Activated CD4-positive, alpha-beta T cell treated with anti-CD3 and anti-CD28 coated beads for 36 hours (primary cell): ENCODE measurements at regions of chr16 and their contacts with region 1.

Region 1: GRCh38 chr16:589658-590159 is at the start of gene RAB40C:
- DNase-seq: peak; percentile 100
- ATAC-seq: peak; percentile 88
- H3K4me3 Mint-ChIP-seq: peak within 1 kb of the TSS; percentile 79
- H3K27ac Mint-ChIP-seq: peak within 1 kb of the TSS; percentile 100
- H3K4me1 Mint-ChIP-seq: peaks cover 22% of the 10 kb centered on the region
- H3K27me3 Mint-ChIP-seq: no peaks in the 10 kb centered on the region
- total RNA-seq, gene RAB40C: 8.9 to 9.6 TPM

Region 2: DNA sequence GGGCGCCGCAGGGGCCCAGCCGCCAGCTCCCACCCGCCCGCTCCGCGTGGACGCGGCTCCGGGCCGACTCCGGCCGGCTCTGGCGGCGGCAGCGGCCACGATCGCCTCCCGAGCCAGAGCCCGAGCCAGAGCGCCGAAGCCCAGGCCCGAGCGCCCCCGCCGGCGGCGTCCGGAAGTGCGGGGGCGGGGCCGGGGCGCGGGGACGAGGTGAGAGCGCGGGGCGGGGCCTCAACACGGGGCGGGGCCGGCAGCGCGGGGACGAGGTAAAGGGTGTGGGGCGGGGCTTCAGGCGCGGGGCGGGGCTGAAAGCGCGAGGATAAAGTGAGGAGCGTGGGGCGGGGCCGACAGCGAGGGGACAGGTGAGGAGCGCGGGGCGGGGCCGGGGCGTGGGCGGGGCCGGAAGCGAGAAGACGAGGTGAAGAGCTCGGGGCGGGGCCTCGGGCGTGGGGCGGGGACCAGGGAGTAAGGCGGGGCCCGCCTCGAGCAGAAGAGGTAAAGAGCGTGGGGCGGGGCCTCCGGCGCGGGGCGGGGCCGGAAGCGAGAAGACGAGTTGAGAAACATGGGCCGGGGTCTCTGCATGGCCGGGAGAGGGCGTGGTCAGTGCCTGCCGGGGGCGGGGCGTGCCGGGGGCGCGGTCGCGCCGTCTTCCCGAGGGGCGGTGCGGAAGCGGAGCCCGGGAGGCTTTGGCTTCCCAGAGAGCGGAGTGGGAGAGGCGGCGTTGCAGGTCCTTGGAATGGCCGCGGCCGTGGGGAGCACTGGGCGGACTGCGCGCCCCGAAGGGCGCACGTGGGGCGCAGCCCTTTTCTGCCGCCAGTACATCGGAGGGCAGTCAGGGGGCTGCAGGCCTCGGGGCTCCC is 236.9 kb before region 1 on chr16 and contains the start of gene AXIN1:
- CTCF ChIA-PET with region 1: no interaction called
- POLR2A ChIA-PET with region 1: no interaction called
- intact Hi-C with region 1: loop called in 1 of 2 experiments (anchors 1 kb)
- DNase-seq: peak; percentile 100
- ATAC-seq: peak; percentile 89
- H3K4me3 Mint-ChIP-seq: peak within 1 kb of the TSS; percentile 80
- H3K27ac Mint-ChIP-seq: peak within 1 kb of the TSS; percentile 79
- H3K4me1 Mint-ChIP-seq: peaks cover 45% of the 10 kb centered on the region
- H3K27me3 Mint-ChIP-seq: no peaks in the 10 kb centered on the region
- total RNA-seq, gene AXIN1: 20.0 to 23.8 TPM

Region 3: GRCh38 chr16:425082-425718 is 164.5 kb before region 1 on chr16 and contains the start of gene RAB11FIP3:
- CTCF ChIA-PET with region 1: no interaction called
- POLR2A ChIA-PET with region 1: no interaction called
- intact Hi-C with region 1: loop called in 1 of 2 experiments (anchors 1 kb)
- DNase-seq: peak; percentile 90
- ATAC-seq: peak; percentile 93
- H3K4me3 Mint-ChIP-seq: peak within 1 kb of the TSS; percentile 74
- H3K27ac Mint-ChIP-seq: peak within 1 kb of the TSS; percentile 47
- H3K4me1 Mint-ChIP-seq: peaks cover 30% of the 10 kb centered on the region
- H3K27me3 Mint-ChIP-seq: peaks cover 5% of the 10 kb centered on the region
- total RNA-seq, gene RAB11FIP3: 14.2 to 17.0 TPM

Region 4: GRCh38 chr16:636206-637080 is 46.7 kb after region 1 on chr16 and contains the start of gene METTL26:
- CTCF ChIA-PET with region 1: interaction called, 3 read pairs
- POLR2A ChIA-PET with region 1: no interaction called
- intact Hi-C with region 1: loop called (anchors 1 kb)
- DNase-seq: peak; percentile 97
- ATAC-seq: peak; percentile 89
- H3K4me3 Mint-ChIP-seq: peak within 1 kb of the TSS; percentile 87
- H3K27ac Mint-ChIP-seq: peak within 1 kb of the TSS; percentile 91
- H3K4me1 Mint-ChIP-seq: peaks cover 13% of the 10 kb centered on the region
- H3K27me3 Mint-ChIP-seq: no peaks in the 10 kb centered on the region
- total RNA-seq, gene METTL26: 116 to 127 TPM

Region 5: GRCh38 chr16:695355-696089 is 105.8 kb after region 1 on chr16:
- CTCF ChIA-PET with region 1: no interaction called
- POLR2A ChIA-PET with region 1: no interaction called
- intact Hi-C with region 1: loop called in 1 of 2 experiments (anchors 1 kb)
- DNase-seq: peak; percentile 89
- ATAC-seq: peak; percentile 82
- H3K4me3 Mint-ChIP-seq: peak overlapping the region; percentile 77
- H3K27ac Mint-ChIP-seq: peak overlapping the region; percentile 80
- H3K4me1 Mint-ChIP-seq: peaks cover 13% of the 10 kb centered on the region
- H3K27me3 Mint-ChIP-seq: no peaks in the 10 kb centered on the region

Region 6: DNA sequence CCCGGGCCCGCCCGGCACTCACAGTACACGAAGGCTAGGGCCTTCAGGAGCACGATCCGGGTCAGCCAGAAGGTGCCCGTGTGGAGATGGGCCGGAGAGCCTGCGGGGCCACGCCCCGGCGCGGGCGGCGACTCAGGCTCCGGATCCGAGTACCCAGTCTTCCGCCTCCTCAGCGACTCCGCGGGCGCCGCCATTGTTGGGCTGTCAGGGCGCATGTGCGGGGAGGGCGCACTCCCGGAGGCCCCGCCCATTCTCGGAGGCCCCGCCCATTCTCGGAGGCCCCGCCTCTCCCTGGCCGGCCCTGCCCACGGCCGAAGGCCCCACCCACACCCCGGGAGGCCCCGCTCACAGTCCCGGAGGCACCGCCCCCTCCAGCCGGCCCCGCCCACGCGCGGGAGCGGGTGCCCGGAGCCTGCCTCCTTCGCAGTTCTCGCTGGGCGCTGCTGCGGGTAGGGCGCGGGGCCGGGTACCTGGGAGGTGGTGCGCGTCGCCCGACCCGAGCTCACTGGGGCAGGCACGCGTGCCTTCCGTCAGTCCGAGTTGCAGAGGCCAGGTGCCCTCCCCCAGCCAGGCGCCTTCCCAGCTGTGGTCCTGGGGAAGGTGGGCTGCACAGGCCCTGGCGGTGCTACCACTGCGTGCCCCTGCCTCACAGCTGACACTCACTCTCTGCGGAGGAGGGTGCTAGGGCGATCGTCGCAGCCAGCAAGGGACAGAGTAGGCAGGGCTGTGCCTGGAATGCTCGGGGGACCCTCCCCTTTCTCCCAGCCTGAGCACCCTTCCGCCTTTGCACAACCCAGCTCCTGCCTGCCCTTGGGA is 381.3 kb after region 1 on chr16 and contains the start of gene LMF1:
- CTCF ChIA-PET with region 1: no interaction called
- POLR2A ChIA-PET with region 1: no interaction called
- intact Hi-C with region 1: loop called in 1 of 2 experiments (anchors 1 kb)
- DNase-seq: peak; percentile 98
- ATAC-seq: peak; percentile 93
- H3K4me3 Mint-ChIP-seq: peak within 1 kb of the TSS; percentile 76
- H3K27ac Mint-ChIP-seq: peak within 1 kb of the TSS; percentile 78
- H3K4me1 Mint-ChIP-seq: peaks cover 15% of the 10 kb centered on the region
- H3K27me3 Mint-ChIP-seq: no peaks in the 10 kb centered on the region
- total RNA-seq, gene LMF1: 9.5 to 12.2 TPM